ENCODE measurements at regions of chr2 and their contacts with region 1.

Region 1: DNA sequence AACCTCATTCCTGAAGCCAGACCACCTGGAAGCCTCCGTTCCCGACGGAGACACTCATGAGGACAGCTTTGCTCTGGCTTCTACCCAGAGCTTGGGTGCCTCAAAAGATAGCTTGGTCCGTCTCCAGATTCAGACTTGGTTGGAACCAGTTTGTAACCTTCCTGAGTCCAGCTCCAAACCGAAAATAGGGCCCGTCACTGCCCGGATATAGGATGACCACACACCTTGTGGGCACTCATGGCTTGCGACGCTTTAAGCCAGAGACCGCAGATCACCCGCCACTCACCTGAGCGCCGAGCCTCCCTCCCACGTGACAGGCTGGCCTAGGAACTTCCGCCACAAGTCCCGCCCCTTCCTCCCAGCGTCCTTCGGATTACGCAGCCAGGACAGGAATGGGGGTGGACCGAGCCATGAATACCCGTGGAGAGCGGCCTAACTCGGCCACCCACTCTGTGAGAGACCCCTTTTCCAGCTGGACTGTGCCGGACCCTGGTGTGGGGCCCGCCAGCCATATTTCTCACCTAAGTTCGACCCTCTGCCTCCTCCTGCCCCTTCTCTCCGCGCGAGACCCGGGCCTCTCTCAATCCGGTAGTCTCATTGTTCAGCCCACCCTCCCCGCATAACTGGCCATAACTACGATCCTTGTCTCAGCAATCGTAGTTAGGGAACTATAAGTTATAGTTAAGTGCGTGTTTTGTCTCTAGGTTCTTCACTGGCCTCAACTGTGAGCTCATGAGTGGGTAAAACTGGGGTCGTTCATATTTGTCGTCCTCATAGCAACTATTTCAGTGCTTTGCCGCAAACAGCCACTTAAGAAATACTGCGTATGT is at the start of gene MPV17:
- DNase-seq: peak; percentile 73
- H3K4me3 ChIP-seq: peak within 1 kb of the TSS; percentile 96
- CTCF ChIP-seq: no peak

Region 2: DNA sequence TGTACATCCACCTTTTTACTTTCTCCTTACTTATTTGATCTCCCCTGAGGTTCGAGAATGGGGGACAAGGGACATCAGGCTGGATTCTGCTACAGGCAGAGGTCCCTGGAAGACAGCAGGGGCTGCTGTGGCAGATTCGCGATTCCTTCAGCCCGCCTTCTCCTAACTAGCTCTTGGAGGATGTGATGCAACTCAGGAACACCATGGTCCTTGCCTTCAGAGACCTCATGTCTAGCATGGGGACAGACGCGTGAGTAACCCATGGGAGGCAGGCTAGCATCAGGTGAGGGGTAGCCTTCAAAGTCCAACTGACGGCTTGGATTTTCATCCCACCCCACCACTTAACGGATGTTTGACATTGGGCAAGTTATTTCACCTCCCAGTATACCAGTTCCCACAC is 175.0 kb before region 1 on chr2:
- CTCF ChIA-PET with region 1: no interaction called
- POLR2A ChIA-PET with region 1: no interaction called
- DNase-seq: no peak
- H3K4me3 ChIP-seq: no peak overlapping the region
- CTCF ChIP-seq: no peak

Region 3: GRCh38 chr2:27308359-27308881 is 14.6 kb before region 1 on chr2 and contains the start of gene UCN:
- CTCF ChIA-PET with region 1: interaction called, 94 read pairs
- POLR2A ChIA-PET with region 1: no interaction called
- DNase-seq: no peak
- H3K4me3 ChIP-seq: no peak within 1 kb of the TSS
- CTCF ChIP-seq: no peak

Region 4: DNA sequence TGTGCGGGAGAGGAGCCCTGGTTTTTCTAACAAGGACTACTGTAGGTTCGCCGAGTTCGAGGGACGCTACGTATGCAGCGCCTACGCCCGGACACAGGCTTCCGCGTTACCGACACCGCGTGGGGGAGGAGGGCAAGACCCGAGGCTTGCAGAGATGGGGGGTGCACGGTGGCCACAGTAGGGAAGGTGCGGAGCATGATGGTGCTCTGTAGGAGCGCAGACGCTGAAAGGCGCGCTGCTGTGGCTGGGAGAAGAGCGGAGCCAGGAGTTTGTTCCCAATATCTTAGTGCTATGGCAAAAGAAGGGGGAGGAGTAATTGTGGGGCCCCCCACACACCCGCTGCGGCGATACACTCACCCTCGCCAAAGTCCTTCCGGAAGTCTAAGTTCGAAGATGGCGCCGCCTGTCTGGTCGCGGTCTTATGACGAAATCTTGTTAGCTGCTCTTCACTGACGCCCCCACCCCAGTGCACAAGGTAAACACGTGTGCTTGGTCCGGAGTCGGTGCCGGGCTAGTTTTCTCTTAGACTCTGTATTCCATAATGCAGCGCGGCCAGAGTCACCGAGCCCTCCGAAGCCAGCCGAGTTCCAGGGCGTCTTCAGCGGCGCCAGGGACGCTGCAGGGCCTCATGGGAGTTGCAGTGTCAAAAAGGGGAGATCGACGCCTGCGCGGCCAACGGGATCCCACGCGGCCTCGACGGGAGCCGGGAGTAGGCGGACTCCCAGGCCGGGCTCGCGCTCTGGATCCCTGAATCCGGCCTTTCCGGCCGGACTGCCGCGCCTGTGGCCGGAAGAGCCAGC is 33.6 kb after region 1 on chr2 and contains the start of gene GTF3C2:
- CTCF ChIA-PET with region 1: interaction called, 3 read pairs
- POLR2A ChIA-PET with region 1: interaction called, 11 read pairs
- DNase-seq: peak; percentile 82
- H3K4me3 ChIP-seq: peak within 1 kb of the TSS; percentile 90
- CTCF ChIP-seq: no peak

Region 5: GRCh38 chr2:27370026-27370815 is 47.2 kb after region 1 on chr2 and contains the starts of genes EIF2B4 and SNX17:
- CTCF ChIA-PET with region 1: interaction called, 12 read pairs
- POLR2A ChIA-PET with region 1: no interaction called
- DNase-seq: peak; percentile 96
- H3K4me3 ChIP-seq: peak within 1 kb of the TSS; percentile 97
- CTCF ChIP-seq: peak; percentile 91

Region 6: GRCh38 chr2:27380626-27381545 is 57.9 kb after region 1 on chr2 and contains the start of gene ZNF513:
- CTCF ChIA-PET with region 1: interaction called, 14 read pairs
- POLR2A ChIA-PET with region 1: no interaction called
- DNase-seq: peak; percentile 55
- H3K4me3 ChIP-seq: peak within 1 kb of the TSS; percentile 88
- CTCF ChIP-seq: no peak

Measured in AG04449 (cell line).